ENCODE measurements at regions of chr6 and their contacts with region 1.

Region 1: DNA sequence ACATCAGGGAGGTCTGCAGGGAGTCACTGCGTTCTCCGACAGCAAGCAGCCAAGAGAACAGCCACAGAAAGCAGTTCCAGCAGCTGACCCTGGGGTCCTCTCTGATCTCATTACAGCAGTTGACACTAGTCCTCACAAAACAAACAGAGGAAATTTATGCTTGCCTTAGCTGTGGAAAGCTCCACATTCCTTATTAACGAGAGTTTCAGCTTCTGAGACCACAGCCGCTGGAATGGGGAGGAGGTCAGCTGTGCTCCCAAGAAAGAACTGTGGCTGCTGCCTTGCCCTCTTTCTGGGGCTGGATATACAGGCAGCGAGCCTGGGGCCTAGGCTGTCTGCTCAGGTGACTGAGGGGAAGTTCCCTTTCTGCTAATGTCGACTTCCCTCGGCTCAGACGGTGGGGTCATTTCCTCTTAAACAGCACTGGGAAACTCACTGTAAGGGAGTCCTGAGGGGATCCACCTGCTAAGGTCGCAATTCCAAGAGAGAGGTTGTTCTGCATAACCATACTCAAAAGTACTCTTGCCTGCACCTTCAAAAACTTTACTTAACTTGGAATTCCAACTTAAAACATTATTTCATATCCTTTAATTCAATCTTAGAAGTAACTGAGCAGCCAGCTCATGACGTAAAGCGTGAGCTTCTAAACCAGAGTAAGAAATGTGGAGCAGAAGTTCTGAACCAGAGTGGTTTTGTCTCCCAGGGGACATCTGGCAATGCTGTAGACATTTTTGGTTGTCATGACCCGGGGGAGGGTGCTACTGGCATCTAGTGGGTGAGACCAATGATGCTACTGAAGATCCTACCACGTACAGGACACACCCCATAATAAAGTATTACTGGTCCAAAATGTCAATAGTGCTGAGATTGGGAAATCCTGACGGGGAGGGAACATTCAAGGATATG is 80.3 kb downstream of the BACH2 start:
- DNase-seq: peak; percentile 60
- H3K4me3 ChIP-seq: no peak overlapping the region
- H3K27ac ChIP-seq: peak overlapping the region; percentile 10
- H3K4me1 ChIP-seq: peaks cover 48% of the 10 kb centered on the region
- H3K27me3 ChIP-seq: no peaks in the 10 kb centered on the region
- CTCF ChIP-seq: no peak
- POLR2A ChIP-seq: no peak

Region 2: GRCh38 chr6:89970609-89971337 is 245.6 kb before region 1 on chr6:
- CTCF ChIA-PET with region 1: no interaction called
- POLR2A ChIA-PET with region 1: interaction called, 5 read pairs
- dilution Hi-C with region 1: no loop called
- intact Hi-C with region 1: loop called (anchors 2 kb)
- DNase-seq: peak; percentile 58
- H3K4me3 ChIP-seq: no peak overlapping the region
- H3K27ac ChIP-seq: no peak overlapping the region
- H3K4me1 ChIP-seq: no peaks in the 10 kb centered on the region
- H3K27me3 ChIP-seq: peaks cover 0 to 11% of the 10 kb centered on the region in 2 experiments
- CTCF ChIP-seq: peak; percentile 48 to 51
- POLR2A ChIP-seq: no peak

Region 3: GRCh38 chr6:90230548-90231215 is 14.4 kb after region 1 on chr6:
- CTCF ChIA-PET with region 1: interaction called, 8 read pairs
- POLR2A ChIA-PET with region 1: interaction called, 7 read pairs
- dilution Hi-C with region 1: no loop called
- intact Hi-C with region 1: loop called (anchors 1 kb)
- DNase-seq: peak; percentile 79
- H3K4me3 ChIP-seq: no peak overlapping the region
- H3K27ac ChIP-seq: no peak overlapping the region
- H3K4me1 ChIP-seq: peaks cover 16% of the 10 kb centered on the region
- H3K27me3 ChIP-seq: no peaks in the 10 kb centered on the region
- CTCF ChIP-seq: no peak
- POLR2A ChIP-seq: no peak

Region 4: DNA sequence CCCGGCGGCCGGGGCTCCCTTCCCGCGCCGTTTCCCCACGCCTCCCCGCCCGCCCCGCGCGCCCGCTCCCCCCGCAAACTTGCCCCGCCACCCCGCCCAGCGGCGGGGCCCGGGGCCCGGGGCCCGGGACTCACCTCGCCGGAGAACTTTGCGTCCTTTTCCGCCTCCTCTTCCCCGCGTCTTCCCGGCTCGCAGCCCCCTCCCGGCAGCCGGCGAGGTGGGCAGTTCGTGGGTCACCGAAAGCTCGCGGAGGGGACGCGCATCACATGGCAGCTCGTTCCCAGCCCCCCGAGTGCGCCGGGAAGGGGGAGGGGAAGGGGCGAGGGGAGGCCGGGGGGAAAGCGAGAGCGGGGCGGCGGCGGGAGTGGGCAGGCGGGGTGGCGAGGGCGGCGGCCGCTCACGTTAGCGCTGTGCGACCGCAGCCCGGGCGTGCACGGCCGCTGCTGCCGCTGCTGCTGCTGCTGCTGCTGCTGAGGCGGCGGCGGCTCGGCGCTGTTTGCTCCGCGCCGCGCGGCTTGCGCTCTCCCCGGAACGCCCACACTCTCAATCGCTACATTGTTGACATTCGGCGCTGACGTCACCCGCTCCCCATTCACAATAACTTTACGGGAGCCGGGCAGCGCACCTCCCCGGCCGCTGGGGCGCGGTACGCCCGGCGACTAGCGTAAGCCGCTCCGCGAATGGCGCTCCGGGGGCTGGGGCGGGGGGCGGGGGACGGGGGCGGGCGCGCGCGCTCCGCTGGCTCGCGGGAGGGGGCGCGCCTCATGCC is 80.2 kb after region 1 on chr6 and contains the start of gene BACH2:
- CTCF ChIA-PET with region 1: interaction called, 9 read pairs
- POLR2A ChIA-PET with region 1: no interaction called
- dilution Hi-C with region 1: no loop called
- intact Hi-C with region 1: loop called (anchors 1 kb)
- DNase-seq: peak; percentile 78
- H3K4me3 ChIP-seq: peak within 1 kb of the TSS; percentile 34 to 83 (median 57)
- H3K27ac ChIP-seq: no peak within 1 kb of the TSS
- H3K4me1 ChIP-seq: peaks cover 6% of the 10 kb centered on the region
- H3K27me3 ChIP-seq: peaks cover 12 to 38% of the 10 kb centered on the region in 2 experiments
- CTCF ChIP-seq: peak in 1 of 2 donors; percentile 30
- POLR2A ChIP-seq: no peak
- total RNA-seq, gene BACH2: 5.6 and 5.9 TPM in 2 replicates

Region 5: GRCh38 chr6:90478789-90479602 is 262.7 kb after region 1 on chr6:
- CTCF ChIA-PET with region 1: interaction called, 5 read pairs
- POLR2A ChIA-PET with region 1: no interaction called
- dilution Hi-C with region 1: no loop called
- intact Hi-C with region 1: loop called (anchors 5 kb)
- DNase-seq: peak; percentile 89
- H3K4me3 ChIP-seq: no peak overlapping the region
- H3K27ac ChIP-seq: no peak overlapping the region
- H3K4me1 ChIP-seq: peaks cover 9% of the 10 kb centered on the region
- H3K27me3 ChIP-seq: peaks cover 0 to 3% of the 10 kb centered on the region in 2 experiments
- CTCF ChIP-seq: peak; percentile 75 to 81
- POLR2A ChIP-seq: no peak